ENCODE measurements at regions of chr12 and their contacts with region 1.

Region 1: DNA sequence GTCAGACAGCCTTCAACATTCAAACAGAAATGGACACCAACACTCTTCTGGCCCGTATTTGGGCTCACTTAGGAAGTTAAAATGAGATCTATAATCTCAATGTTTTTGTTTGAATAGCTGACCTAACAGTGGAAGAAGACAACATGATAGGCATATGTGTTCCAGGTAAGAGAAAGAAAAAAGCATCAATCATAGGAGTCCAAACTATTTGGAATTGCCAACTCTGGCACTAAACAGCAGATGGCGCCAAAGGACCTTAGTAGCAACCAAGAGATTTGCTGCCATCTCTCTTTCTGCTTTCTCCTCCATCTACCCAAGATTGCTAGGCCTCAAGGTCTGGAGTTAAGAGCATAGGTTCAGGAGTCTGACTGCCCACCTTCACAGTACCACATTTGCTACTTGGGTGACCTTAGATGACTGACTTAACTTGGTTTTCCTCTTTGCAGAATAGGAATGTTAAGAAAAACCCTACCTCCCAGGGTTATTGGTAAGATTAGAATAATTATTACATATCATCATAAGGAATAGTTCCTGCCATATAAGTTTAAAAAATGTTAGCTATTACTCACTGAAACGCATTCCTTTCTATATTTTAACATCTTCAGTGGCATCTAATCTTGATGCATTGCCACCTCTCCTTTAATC is 30.2 kb downstream of the PEX5 start:
- DNase-seq: peak; percentile 73
- ATAC-seq: peak; percentile 82
- H3K4me3 ChIP-seq: no peak overlapping the region
- H3K27ac ChIP-seq: no peak overlapping the region
- H3K4me1 ChIP-seq: no peaks in the 10 kb centered on the region
- H3K27me3 ChIP-seq: peaks cover 9% of the 10 kb centered on the region
- CTCF ChIP-seq: peak; percentile 97
- POLR2A ChIP-seq: 0 out of 2 replicates have a peak, but pooled peaks have one; percentile 44
- RAD21 ChIP-seq: peak; percentile 99

Region 2: GRCh38 chr12:7207866-7208625 is 11.7 kb before region 1 on chr12:
- CTCF ChIA-PET with region 1: no interaction called
- POLR2A ChIA-PET with region 1: no interaction called
- dilution Hi-C with region 1: no loop called
- in situ Hi-C with region 1: no loop called
- intact Hi-C with region 1: no loop called
- DNase-seq: no peak
- ATAC-seq: no peak
- H3K4me3 ChIP-seq: no peak overlapping the region
- H3K27ac ChIP-seq: no peak overlapping the region
- H3K4me1 ChIP-seq: no peaks in the 10 kb centered on the region
- H3K27me3 ChIP-seq: no peaks in the 10 kb centered on the region
- CTCF ChIP-seq: no peak
- POLR2A ChIP-seq: no peak
- RAD21 ChIP-seq: no peak

Region 3: DNA sequence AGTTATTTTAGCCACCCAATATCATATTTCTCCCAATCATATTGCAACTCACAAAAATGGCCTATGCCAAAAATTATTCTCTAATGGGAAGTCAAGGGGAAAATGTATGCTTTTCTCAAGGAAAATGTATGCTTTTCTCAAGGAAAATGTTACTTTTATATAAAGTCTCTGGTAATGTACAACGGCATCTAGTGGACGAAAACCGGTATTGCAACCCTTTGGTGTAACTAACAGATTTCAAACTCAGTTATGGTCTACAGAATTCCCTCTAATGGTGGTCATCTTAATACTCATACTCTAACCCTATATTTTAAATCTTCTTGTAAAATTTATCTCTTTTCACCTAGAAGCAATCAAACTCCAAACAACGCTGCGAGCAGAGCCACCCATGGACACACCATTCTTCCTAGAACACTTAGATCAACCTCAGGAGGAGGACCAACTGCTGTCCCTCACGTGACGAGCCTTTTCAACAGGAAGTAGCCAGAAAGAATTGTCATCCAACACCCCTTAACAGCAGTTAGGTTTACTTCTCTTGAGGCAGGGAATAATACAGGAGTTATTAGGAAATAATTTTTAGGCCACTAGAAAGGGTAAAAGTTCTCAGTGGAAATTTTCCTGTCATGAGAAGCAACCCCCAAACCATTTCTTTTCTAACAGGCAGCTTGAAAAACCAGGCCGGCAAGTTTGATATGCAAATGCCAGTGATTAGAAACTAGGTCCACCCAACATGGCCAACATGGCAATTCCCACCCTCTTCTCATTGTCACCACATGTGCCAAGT is 425.9 kb after region 1 on chr12:
- CTCF ChIA-PET with region 1: no interaction called
- POLR2A ChIA-PET with region 1: no interaction called
- dilution Hi-C with region 1: no loop called
- in situ Hi-C with region 1: loop called (anchors 5 kb)
- intact Hi-C with region 1: no loop called
- DNase-seq: peak; percentile 31
- ATAC-seq: peak; percentile 60; the same call in 1 of the 2 replicates
- H3K4me3 ChIP-seq: no peak overlapping the region
- H3K27ac ChIP-seq: no peak overlapping the region
- H3K4me1 ChIP-seq: no peaks in the 10 kb centered on the region
- H3K27me3 ChIP-seq: no peaks in the 10 kb centered on the region; the same call in 1 of the 2 replicates
- CTCF ChIP-seq: peak; percentile 73
- POLR2A ChIP-seq: no peak
- RAD21 ChIP-seq: peak; percentile 30